Endothelial cell of umbilical vein (primary cell): ENCODE measurements at regions of chr15 and their contacts with region 1.

Region 1: GRCh38 chr15:34109797-34110663 is 8.1 kb downstream of the PGBD4 start:
- DNase-seq: peak; percentile 56
- H3K4me3 ChIP-seq: no peak overlapping the region
- H3K27ac ChIP-seq: no peak overlapping the region
- H3K4me1 ChIP-seq: no peaks in the 10 kb centered on the region
- H3K27me3 ChIP-seq: no peaks in the 10 kb centered on the region
- CTCF ChIP-seq: peak; percentile 38 to 57
- POLR2A ChIP-seq: no peak

Region 2: DNA sequence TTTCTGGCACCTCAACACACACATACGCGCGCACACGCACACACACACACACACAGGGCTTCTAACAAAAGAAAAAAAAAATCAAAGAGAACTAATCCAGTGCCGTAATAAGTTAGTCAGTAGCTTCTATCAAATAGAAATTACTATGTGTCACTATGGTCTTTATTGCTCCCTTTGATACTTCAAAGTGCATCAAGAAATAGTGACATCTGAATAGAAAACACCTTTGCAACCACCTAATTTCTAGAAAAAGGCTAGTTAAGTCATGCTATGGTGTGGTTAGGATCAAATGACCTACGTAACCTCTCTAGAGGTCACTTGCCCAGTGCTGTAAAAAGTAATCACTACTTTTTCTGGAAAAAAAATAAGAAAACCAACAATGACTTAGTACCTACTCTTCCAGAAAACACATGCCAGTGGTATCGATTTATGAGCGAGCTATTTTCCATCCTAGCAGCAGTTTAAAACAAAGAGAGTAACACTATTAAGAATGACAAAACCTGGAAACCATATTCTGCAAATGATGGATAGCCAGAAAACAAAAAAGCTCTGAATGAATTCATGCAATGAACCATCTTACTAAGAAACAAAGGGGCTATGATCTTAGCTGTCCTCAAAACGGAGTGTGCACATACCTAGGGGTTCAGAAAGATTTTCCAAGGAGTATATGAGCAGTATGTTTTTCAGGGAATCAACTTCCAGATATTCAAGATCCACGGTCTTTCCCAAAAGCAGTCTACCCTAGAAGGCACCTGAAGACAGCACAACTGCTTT is 77.9 kb before region 1 on chr15:
- CTCF ChIA-PET with region 1: no interaction called
- POLR2A ChIA-PET with region 1: no interaction called
- dilution Hi-C with region 1: no loop called
- intact Hi-C with region 1: no loop called
- DNase-seq: no peak
- H3K4me3 ChIP-seq: no peak overlapping the region
- H3K27ac ChIP-seq: no peak overlapping the region
- H3K4me1 ChIP-seq: no peaks in the 10 kb centered on the region
- H3K27me3 ChIP-seq: no peaks in the 10 kb centered on the region
- CTCF ChIP-seq: no peak
- POLR2A ChIP-seq: no peak

Region 3: DNA sequence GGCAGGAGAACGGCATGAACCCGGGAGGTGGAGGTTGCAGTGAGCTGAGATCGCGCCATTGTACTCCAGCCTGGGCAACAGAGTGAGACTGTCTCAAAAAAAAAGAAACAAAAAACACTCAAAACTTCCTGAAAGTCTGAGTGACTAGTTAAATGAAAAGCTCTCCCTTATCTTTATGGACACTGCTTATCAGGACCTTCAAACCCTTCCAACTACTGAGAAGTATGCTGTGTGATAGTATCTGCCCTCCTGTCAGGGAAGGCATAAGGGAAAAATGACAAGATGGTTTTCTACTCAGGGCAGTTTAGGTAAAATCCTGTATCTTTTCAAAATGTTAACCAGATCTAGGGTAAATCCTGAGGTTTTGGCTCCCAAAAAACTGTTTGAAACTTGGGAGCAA is 30.1 kb before region 1 on chr15:
- CTCF ChIA-PET with region 1: no interaction called
- POLR2A ChIA-PET with region 1: no interaction called
- dilution Hi-C with region 1: no loop called
- intact Hi-C with region 1: no loop called
- DNase-seq: no peak
- H3K4me3 ChIP-seq: no peak overlapping the region
- H3K27ac ChIP-seq: no peak overlapping the region
- H3K4me1 ChIP-seq: no peaks in the 10 kb centered on the region
- H3K27me3 ChIP-seq: no peaks in the 10 kb centered on the region
- CTCF ChIP-seq: no peak
- POLR2A ChIP-seq: no peak

Region 4: DNA sequence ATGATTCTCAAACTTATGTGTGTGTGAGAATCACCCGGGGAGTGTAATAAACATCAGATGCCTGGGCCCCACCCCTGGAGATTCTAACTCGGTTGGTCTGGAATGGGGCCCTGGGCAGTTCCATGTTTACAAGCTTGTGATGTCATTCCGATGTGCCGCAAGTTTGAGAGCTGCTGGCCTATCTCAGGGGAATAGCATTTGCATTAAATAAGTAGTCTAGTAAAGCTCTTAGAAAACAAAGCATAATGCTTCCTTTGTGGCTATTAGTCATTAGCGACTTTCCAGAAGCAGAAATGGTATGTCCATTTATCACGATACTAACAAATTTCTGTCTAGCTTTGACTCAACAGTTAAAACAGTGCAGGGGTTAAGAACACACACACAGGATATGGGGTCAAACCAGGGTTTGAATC is 12.7 kb after region 1 on chr15:
- CTCF ChIA-PET with region 1: interaction called, 22 read pairs
- POLR2A ChIA-PET with region 1: no interaction called
- dilution Hi-C with region 1: no loop called
- intact Hi-C with region 1: no loop called
- DNase-seq: peak; percentile 87
- H3K4me3 ChIP-seq: no peak overlapping the region
- H3K27ac ChIP-seq: peak overlapping the region; percentile 85
- H3K4me1 ChIP-seq: peaks cover 16% of the 10 kb centered on the region
- H3K27me3 ChIP-seq: no peaks in the 10 kb centered on the region
- CTCF ChIP-seq: no peak
- POLR2A ChIP-seq: no peak

Region 5: DNA sequence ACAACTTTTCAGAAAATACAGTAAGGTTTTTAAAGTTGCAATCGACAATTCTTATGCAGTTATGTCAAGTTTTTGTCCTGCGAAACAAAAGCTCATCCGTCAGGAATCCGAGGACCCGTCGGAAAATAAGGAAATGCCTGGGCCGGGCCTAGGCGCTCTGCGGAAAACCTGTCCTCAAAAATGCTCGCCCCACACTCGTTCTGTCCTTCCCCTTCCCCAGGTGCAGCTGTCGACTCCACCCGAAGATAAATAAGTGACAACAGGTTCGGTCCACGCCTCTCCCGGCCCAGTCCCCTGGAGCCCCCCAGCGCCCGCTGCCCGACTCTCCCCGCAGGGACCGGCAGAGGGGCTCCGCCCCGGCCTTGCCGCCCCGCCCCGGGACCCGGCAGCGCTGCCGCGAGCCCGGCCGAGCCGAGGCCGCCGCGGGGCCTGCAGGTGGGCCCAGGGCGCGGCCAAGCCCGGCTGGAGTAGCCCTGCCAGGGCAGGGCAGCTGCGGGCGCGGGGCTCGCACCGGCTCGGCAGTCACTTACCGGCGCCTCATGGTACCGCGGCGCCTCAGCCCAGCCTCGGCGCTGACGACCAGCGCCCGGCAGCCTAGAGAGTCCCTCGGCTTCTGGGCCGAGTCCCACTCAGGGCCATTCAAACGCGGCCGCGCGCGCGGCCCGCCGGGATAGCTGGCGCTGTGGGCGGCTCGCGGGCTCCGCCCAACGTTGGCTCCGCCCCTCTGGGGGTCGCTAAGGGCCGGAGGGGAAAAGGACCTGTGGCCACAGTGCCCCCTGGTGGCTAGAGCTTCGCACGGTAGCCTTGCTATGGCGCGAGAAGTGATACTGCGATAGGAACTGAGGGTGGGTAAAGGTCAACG is 99.6 kb after region 1 on chr15 and contains the start of gene KATNBL1:
- CTCF ChIA-PET with region 1: interaction called, 235 read pairs
- POLR2A ChIA-PET with region 1: interaction called, 13 read pairs
- dilution Hi-C with region 1: no loop called
- intact Hi-C with region 1: loop called (anchors 1 kb)
- DNase-seq: peak; percentile 93
- H3K4me3 ChIP-seq: peak within 1 kb of the TSS; percentile 96 to 100 (median 99)
- H3K27ac ChIP-seq: peak within 1 kb of the TSS; percentile 88
- H3K4me1 ChIP-seq: peaks cover 7% of the 10 kb centered on the region
- H3K27me3 ChIP-seq: no peaks in the 10 kb centered on the region
- CTCF ChIP-seq: peak; percentile 93 to 94
- POLR2A ChIP-seq: peak; percentile 94
- total RNA-seq, gene KATNBL1: 56.8 and 57.9 TPM in 2 replicates

Region 6: DNA sequence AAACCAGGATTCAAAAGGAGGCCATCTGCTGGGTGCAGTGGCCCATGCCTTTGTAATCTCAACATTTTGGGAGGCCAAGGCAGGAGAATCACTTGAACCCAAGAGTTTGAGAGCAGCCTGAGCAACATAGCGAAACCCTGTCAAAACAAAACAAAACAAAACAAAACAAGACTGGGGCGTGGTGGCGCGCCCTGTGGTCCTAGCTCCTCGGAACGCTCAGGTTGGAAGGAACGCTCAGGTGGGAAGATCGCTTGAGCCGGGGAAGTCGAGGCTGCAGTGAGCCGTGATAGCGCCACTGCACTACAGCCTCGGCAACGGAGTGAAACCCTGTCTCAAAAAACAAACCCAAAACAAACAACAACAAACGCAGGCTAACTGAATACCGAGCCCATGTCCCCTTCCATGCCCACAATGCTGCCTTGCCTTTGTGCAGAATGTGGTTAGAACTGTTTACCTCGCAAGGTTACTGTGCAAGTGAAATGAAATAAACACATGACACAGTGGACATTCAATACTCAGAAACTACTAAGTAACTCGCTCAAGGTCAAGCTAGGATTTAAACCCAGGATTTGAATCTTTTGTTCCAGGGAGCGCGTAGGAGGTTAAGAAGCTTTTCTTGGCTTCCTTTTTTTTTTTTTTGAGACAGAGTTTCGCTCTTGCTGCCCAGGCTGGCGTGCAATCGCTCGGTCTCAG is 114.0 kb after region 1 on chr15:
- CTCF ChIA-PET with region 1: interaction called, 10 read pairs
- POLR2A ChIA-PET with region 1: no interaction called
- dilution Hi-C with region 1: no loop called
- intact Hi-C with region 1: no loop called
- DNase-seq: peak; percentile 44
- H3K4me3 ChIP-seq: peak overlapping the region; percentile 31 to 94 (median 67)
- H3K27ac ChIP-seq: peak overlapping the region; percentile 40
- H3K4me1 ChIP-seq: peaks cover 9% of the 10 kb centered on the region
- H3K27me3 ChIP-seq: no peaks in the 10 kb centered on the region
- CTCF ChIP-seq: no peak
- POLR2A ChIP-seq: no peak

Region 7: GRCh38 chr15:34323217-34323616 is 213.2 kb after region 1 on chr15:
- CTCF ChIA-PET with region 1: no interaction called
- POLR2A ChIA-PET with region 1: no interaction called
- dilution Hi-C with region 1: no loop called
- intact Hi-C with region 1: no loop called
- DNase-seq: no peak
- H3K4me3 ChIP-seq: no peak overlapping the region
- H3K27ac ChIP-seq: no peak overlapping the region
- H3K4me1 ChIP-seq: peaks cover 7% of the 10 kb centered on the region
- H3K27me3 ChIP-seq: no peaks in the 10 kb centered on the region
- CTCF ChIP-seq: no peak
- POLR2A ChIP-seq: no peak

Region 8: GRCh38 chr15:34342737-34343575 is 232.9 kb after region 1 on chr15 and contains the starts of genes NOP10 and NUTM1:
- CTCF ChIA-PET with region 1: interaction called, 8 read pairs
- POLR2A ChIA-PET with region 1: no interaction called
- dilution Hi-C with region 1: no loop called
- intact Hi-C with region 1: loop called (anchors 1 kb)
- DNase-seq: peak; percentile 94
- H3K4me3 ChIP-seq: peak within 1 kb of the TSS; percentile 26 to 89 (median 66)
- H3K27ac ChIP-seq: peak within 1 kb of the TSS; percentile 76
- H3K4me1 ChIP-seq: peaks cover 11% of the 10 kb centered on the region
- H3K27me3 ChIP-seq: no peaks in the 10 kb centered on the region
- CTCF ChIP-seq: peak; percentile 87 to 99
- POLR2A ChIP-seq: peak; percentile 94
- total RNA-seq, gene NOP10: 215 and 225 TPM in 2 replicates
- total RNA-seq, gene NUTM1: not detected in 2 replicates